Activated CD4-positive, alpha-beta memory T cell treated with anti-CD3 and anti-CD28 coated beads, Interleukin-2, amount 10 ng/mL, durations not matched to agents 7 days and 5 days (primary cell): ENCODE measurements at regions of chr2 and their contacts with region 1.

Region 1: DNA sequence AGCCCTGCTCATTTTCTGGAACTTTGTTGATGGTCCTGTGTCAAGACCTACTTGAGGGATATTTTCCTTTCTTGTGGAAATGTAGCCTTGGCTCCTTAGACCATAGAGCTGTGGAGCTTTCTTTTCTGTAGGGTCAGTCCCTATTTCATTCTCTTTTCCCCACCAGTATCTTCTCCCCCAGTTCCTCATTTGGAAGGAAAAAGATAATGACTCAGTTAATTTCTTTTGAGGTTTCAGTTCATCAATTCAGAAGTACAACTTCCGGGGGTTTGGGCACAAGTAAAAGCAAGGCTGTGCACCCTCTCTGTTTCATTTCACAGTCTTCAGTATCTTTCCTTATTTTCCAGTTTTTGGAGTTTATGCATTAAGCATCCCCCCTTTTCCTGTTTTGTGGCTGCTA is 70.7 kb downstream of the CDC42EP3 start:
- DNase-seq: no peak
- H3K4me3 Mint-ChIP-seq: peak overlapping the region; percentile 85
- H3K27ac Mint-ChIP-seq: peak overlapping the region; percentile 89
- H3K4me1 Mint-ChIP-seq: peaks cover 68% of the 10 kb centered on the region
- H3K27me3 Mint-ChIP-seq: peaks cover 5% of the 10 kb centered on the region

Region 2: GRCh38 chr2:37615804-37616676 is 15.3 kb after region 1 on chr2:
- CTCF ChIA-PET with region 1: interaction called, 13 read pairs
- POLR2A ChIA-PET with region 1: interaction called, 66 read pairs
- DNase-seq: peak; percentile 88
- H3K4me3 Mint-ChIP-seq: no peak overlapping the region
- H3K27ac Mint-ChIP-seq: peak overlapping the region; percentile 92
- H3K4me1 Mint-ChIP-seq: peaks cover 50% of the 10 kb centered on the region
- H3K27me3 Mint-ChIP-seq: no peaks in the 10 kb centered on the region

Region 3: DNA sequence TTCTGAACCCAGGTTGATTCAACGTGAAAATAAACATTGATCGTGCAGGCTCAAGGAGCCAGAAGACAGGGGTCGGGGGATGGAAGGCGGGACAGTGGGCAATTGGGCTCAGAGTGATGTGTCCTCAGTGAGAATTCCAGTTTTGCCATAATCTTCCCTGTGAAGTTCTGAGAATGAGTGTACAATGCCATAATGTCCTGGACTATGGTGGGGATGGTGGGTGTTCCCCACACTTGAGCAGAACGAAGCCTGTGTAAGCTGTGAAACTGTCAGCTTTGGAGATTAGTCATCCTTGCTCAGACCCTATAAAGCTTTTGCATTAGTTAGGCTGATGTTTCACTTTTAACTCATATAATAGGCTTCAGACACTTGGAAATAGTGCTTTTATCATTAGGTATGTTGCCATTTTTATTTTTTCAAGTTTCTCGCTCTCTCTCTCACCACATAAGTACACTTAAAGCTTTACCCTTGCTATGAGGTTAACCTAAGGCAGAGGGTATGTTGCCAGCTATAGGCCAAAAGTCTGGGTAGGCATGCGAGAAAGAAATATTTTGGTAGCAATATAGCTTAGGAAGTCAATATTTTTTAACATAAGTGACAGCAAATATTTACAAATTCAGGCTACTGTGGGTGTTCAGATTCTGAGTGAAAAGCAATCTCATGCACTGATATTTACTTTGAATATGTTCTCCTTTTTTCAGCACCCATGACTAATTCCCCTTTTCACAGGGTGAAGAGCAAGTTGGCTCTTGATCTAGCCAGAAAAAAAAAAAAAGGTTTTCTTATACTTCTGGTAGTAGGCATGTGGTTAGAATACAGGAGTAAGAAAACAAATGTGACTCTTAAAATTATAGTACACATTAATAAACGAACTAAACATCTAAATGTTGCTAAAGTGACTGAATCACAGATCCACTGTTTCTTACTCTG is 23.5 kb after region 1 on chr2:
- CTCF ChIA-PET with region 1: interaction called, 11 read pairs
- POLR2A ChIA-PET with region 1: interaction called, 54 read pairs
- DNase-seq: peak; percentile 33
- H3K4me3 Mint-ChIP-seq: peak overlapping the region; percentile 28
- H3K27ac Mint-ChIP-seq: peak overlapping the region; percentile 91
- H3K4me1 Mint-ChIP-seq: peaks cover 53% of the 10 kb centered on the region
- H3K27me3 Mint-ChIP-seq: no peaks in the 10 kb centered on the region

Region 4: DNA sequence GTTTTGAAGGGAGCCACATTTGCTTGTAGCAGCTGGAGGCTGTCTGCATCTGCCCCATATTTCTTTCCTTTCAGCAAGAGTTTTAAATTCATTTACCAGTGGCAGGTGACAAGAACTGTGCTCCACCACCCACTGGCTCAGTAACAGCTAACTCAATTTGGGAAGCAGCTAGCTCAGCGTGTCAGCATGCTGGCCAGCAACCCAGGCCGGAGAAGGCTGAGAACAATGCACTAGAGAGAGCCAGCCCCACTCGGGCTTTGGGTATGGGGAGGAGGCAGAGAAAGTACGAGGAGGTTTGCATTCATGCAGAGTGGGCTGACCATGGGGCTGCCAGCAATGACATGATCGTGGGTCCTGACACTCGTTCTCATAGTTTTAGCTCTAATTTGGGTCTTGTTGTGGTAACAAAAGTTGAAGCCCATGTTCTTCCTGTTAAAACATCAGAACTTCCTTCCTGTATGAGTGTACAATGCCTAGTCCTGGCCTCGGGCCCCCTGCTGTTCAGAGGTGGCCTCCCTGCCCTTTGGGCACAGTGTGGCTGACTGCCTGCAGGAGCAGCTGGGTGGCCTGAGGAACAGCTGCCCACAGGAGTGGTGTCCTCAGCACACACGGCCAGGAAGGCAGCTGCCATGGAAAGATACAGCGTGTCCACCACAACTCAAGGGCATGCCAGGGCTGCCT is 47.7 kb after region 1 on chr2:
- CTCF ChIA-PET with region 1: interaction called, 7 read pairs
- POLR2A ChIA-PET with region 1: interaction called, 25 read pairs
- DNase-seq: peak; percentile 66
- H3K4me3 Mint-ChIP-seq: peak overlapping the region; percentile 12
- H3K27ac Mint-ChIP-seq: peak overlapping the region; percentile 91
- H3K4me1 Mint-ChIP-seq: peaks cover 92% of the 10 kb centered on the region
- H3K27me3 Mint-ChIP-seq: no peaks in the 10 kb centered on the region

Region 5: DNA sequence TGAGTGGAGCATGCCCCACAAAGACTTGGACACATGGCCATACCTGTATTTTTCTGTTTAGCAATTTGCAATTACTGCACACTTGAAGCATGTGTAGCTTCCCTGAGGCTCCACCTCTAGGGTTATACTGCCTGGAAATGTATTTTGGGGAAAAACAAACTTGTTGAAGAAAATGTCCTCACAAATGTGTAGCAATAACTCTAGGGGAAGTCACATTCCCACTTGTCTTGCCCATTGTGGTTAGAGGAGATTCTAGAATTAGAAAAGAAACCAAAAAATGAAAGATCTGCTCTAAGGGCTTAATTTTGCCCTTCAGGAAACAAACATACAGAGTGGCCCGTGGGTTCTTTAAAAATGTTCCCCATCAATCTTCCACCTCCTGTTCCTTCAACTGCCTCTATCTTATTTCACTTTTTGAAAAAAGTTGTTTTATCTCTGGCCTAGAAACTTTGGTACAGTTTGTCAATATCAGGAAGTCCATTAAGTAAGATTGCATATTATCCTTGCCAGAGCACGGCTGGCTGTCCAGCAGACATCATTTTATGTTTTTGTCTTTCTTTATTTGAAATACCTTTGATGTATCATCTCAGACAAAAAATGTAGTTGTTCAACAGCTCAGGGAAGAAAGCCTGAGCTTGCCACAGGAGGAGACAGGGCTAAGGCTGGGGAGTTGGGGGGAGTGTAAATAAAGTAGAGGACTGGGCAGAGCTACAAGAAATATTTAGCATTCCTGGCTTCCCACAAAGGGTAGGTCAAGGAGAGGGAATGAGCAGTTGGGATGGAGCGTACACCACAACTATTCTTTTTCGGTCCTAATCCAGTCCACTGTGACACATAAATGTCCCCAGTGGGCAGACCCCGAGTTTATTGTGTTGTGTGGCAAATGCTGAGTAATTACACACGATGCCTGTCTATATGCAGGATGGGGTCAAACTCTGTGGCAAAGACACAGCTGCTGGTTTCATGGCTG is 167.5 kb after region 1 on chr2:
- CTCF ChIA-PET with region 1: no interaction called
- POLR2A ChIA-PET with region 1: no interaction called
- DNase-seq: no peak
- H3K4me3 Mint-ChIP-seq: no peak overlapping the region
- H3K27ac Mint-ChIP-seq: no peak overlapping the region
- H3K4me1 Mint-ChIP-seq: peaks cover 4% of the 10 kb centered on the region
- H3K27me3 Mint-ChIP-seq: no peaks in the 10 kb centered on the region